Naive thymus-derived CD4-positive, alpha-beta T cell (primary cell): ENCODE measurements at regions of chr5 and their contacts with region 1.

Region 1: DNA sequence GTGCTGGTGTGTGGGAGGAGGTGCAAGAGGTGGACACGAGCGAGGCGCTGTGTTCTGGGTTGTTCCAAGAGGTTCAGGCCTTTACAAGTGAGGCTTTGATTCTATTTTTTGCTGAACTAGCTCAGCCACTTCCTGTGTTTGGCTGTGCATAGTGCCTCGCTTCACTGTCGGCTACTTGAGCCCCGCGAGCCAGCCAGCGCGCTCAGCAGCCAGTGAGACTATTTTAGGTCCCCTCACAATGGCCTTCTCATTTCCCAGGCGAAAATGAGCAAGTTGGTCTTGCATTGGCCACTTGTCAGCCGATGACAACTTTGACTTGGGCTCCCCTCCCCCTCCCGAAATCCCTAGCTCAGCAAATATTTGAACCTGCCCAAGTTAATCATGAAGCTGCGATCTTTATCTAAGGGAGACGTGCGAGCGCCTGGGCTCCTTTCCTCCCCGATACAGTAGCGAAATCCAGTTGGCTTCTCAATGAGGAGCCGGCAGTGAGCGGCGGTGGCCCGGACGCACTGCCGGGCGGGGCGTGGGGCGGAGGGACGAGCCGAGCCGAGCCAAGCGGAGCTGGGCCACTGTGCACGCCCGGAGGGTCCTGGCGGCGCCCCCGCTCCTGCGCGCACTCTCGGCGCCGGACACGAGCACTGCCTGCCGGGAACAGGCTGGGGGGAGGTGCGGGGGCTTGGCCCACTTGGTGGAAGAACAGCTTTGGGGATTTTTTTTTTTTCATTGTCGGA is 72.6 kb downstream of the PIK3R1 start:
- DNase-seq: peak; percentile 19 to 55 (median 49)
- ATAC-seq: peak; percentile 76
- H3K4me3 ChIP-seq: peak overlapping the region; percentile 65
- H3K4me3 Mint-ChIP-seq: peak overlapping the region; percentile 81 to 93 (median 90)
- H3K27ac ChIP-seq: peak overlapping the region; percentile 55
- H3K27ac Mint-ChIP-seq: peak overlapping the region; percentile 75 to 97 (median 92)
- H3K4me1 ChIP-seq: peaks cover 64 to 79% of the 10 kb centered on the region in 2 donors
- H3K4me1 Mint-ChIP-seq: peaks cover 49 to 96% (median 90%) of the 10 kb centered on the region in 7 donors
- H3K27me3 ChIP-seq: no peaks in the 10 kb centered on the region
- H3K27me3 Mint-ChIP-seq: no peaks in the 10 kb centered on the region

Region 2: GRCh38 chr5:67453111-67453905 is 834.8 kb before region 1 on chr5:
- CTCF ChIA-PET with region 1: no interaction called
- POLR2A ChIA-PET with region 1: no interaction called
- intact Hi-C with region 1: no loop called
- DNase-seq: no peak
- ATAC-seq: no peak
- H3K4me3 ChIP-seq: no peak overlapping the region
- H3K4me3 Mint-ChIP-seq: no peak overlapping the region
- H3K27ac ChIP-seq: no peak overlapping the region
- H3K27ac Mint-ChIP-seq: no peak overlapping the region
- H3K4me1 ChIP-seq: no peaks in the 10 kb centered on the region
- H3K4me1 Mint-ChIP-seq: peaks cover 0 to 15% (median 5%) of the 10 kb centered on the region in 7 donors
- H3K27me3 ChIP-seq: no peaks in the 10 kb centered on the region
- H3K27me3 Mint-ChIP-seq: peaks cover 0 to 11% (median 0%) of the 10 kb centered on the region in 5 donors

Region 3: DNA sequence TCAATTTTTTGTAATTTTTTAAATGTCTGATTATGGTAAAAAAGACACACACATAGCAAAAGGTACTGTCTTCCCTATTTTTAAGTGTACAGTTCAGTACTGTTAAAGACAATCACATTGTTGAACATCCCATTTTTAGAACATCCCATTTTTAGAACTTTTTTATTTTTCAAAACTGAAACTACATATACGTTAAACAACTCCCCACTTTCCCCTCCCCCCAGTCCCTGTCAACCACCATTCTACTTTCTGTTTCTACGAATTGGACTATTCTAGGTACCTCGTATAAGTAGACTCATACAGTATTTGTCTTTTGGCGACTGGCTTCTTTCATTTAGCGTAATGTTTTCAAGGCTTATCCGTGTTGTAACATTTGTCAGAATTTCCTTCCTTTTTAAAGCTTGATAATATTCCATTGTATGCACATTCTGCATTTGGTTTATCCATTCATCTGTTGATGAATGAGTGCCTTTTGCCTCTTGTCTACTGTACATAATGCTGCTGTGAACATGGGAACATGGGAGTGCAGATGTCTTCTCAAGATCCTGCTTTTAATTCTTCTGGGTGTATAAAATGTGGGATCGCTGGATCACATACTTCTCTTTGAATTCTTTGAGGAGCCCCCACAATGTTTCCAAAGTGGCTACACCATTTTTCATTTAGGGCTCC is 81.5 kb after region 1 on chr5:
- CTCF ChIA-PET with region 1: interaction called, 3 read pairs
- POLR2A ChIA-PET with region 1: no interaction called
- intact Hi-C with region 1: loop called in 1 of 2 experiments (anchors 2 kb)
- DNase-seq: peak in 7 of 9 donors; percentile 17 to 52 (median 50)
- ATAC-seq: peak; percentile 83
- H3K4me3 ChIP-seq: peak overlapping the region; percentile 26
- H3K4me3 Mint-ChIP-seq: peak overlapping the region; percentile 36 to 84 (median 76)
- H3K27ac ChIP-seq: no peak overlapping the region
- H3K27ac Mint-ChIP-seq: peak overlapping the region; percentile 23 to 91 (median 68)
- H3K4me1 ChIP-seq: peaks cover 0 to 16% of the 10 kb centered on the region in 2 donors
- H3K4me1 Mint-ChIP-seq: peaks cover 6 to 51% (median 29%) of the 10 kb centered on the region in 7 donors
- H3K27me3 ChIP-seq: no peaks in the 10 kb centered on the region
- H3K27me3 Mint-ChIP-seq: peaks cover 0 to 6% (median 0%) of the 10 kb centered on the region in 5 donors

Region 4: DNA sequence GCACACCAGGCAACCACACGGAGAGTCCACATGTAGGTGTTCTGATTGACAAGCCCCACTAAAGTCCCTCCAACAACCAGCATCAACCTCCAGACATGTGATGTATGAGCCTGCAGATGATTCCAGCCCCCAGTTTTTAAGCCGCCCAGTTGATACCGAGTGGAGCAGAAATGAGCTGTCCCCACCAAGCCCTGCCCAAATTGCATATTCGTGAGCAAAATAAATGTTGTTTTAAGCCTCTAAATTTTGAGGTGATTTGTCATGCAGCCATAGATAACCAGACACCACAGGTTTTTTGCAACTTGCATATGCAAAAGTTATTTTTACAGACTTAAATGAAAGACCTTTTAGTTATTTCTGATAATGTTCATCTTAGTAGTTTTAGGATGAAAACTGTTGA is 115.2 kb after region 1 on chr5:
- CTCF ChIA-PET with region 1: no interaction called
- POLR2A ChIA-PET with region 1: no interaction called
- intact Hi-C with region 1: no loop called
- DNase-seq: no peak
- ATAC-seq: no peak
- H3K4me3 ChIP-seq: no peak overlapping the region
- H3K4me3 Mint-ChIP-seq: no peak overlapping the region
- H3K27ac ChIP-seq: no peak overlapping the region
- H3K27ac Mint-ChIP-seq: no peak overlapping the region
- H3K4me1 ChIP-seq: peaks cover 8 to 18% of the 10 kb centered on the region in 2 donors
- H3K4me1 Mint-ChIP-seq: peaks cover 12 to 25% (median 14%) of the 10 kb centered on the region in 7 donors
- H3K27me3 ChIP-seq: no peaks in the 10 kb centered on the region
- H3K27me3 Mint-ChIP-seq: no peaks in the 10 kb centered on the region

Region 5: DNA sequence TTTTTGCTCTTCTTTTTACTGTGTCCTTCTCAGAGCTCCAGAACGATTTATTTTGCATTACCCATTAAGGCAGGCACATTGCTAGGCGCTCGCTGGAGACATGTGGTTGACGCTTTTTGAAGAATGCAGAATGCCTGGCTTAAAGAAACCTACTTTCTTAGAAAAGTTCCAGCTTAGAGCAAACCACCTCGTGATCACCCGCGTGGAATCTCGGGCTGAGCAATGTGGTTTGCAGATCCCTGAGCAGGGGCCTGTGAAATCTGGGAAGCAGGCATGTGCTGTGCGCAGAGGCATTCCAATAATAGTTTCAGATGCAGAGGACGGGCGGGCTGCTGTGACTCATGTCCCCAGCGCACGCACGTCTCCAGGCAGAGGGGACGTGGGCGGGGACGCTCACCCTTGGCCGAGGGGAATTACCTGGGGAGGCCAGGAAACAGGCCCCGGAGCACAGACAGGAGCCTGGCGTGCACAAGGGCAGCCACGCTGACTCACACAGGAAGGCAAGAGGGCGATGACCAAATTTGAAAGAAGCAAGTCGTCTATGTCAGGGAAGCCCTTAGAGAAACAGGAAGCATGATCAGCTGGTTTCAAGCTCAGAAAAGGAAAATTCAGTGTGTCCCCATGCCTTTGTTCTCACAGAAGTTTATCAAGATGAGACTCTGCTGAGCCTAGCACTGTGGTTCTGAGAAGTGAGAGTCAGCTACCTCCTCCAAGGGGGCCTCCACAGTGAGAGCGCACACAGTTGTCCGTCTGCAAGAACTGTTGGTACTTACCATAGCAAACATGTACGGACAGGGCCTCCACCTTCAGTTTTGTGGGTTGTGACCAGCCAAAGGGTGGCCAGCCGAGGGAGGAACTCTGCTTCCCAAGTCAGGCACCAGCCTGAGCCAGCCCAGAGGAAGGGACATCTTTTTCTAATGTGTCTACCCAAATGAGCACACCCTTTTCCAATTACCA is 146.1 kb after region 1 on chr5:
- CTCF ChIA-PET with region 1: interaction called, 4 read pairs
- POLR2A ChIA-PET with region 1: interaction called, 4 read pairs
- intact Hi-C with region 1: loop called (anchors 1 kb)
- DNase-seq: peak; percentile 45 to 91 (median 68)
- ATAC-seq: peak; percentile 94
- H3K4me3 ChIP-seq: peak overlapping the region; percentile 36
- H3K4me3 Mint-ChIP-seq: peak overlapping the region; percentile 37 to 81 (median 76)
- H3K27ac ChIP-seq: no peak overlapping the region
- H3K27ac Mint-ChIP-seq: peak overlapping the region; percentile 52 to 92 (median 76)
- H3K4me1 ChIP-seq: peaks cover 17 to 23% of the 10 kb centered on the region in 2 donors
- H3K4me1 Mint-ChIP-seq: peaks cover 23 to 45% (median 34%) of the 10 kb centered on the region in 7 donors
- H3K27me3 ChIP-seq: no peaks in the 10 kb centered on the region
- H3K27me3 Mint-ChIP-seq: peaks cover 0 to 63% (median 0%) of the 10 kb centered on the region in 5 donors

Region 6: DNA sequence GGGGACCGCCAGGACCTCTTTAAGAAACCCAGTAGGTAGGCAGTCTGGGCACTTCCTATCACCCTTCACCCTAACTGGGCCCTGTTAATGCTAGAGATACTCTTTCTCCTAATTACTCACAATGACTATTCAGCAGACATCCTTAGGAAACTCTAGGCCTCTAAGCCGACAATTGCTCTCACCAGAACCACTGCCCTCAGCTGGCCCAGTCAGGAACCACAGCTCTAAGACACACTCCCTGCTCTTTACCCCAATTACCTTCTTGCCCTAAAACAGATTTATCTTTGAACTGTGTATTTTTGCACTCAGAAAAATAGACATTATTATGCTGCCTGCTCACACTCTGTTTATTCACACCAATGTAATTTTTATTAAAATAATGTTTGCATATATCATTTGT is 373.1 kb after region 1 on chr5:
- CTCF ChIA-PET with region 1: no interaction called
- POLR2A ChIA-PET with region 1: no interaction called
- intact Hi-C with region 1: loop called (anchors 2 to 5 kb)
- DNase-seq: no peak
- ATAC-seq: no peak
- H3K4me3 ChIP-seq: no peak overlapping the region
- H3K4me3 Mint-ChIP-seq: no peak overlapping the region
- H3K27ac ChIP-seq: no peak overlapping the region
- H3K27ac Mint-ChIP-seq: no peak overlapping the region
- H3K4me1 ChIP-seq: no peaks in the 10 kb centered on the region
- H3K4me1 Mint-ChIP-seq: peaks cover 0 to 8% (median 0%) of the 10 kb centered on the region in 7 donors
- H3K27me3 ChIP-seq: no peaks in the 10 kb centered on the region
- H3K27me3 Mint-ChIP-seq: peaks cover 0 to 11% (median 4%) of the 10 kb centered on the region in 5 donors

Region 7: DNA sequence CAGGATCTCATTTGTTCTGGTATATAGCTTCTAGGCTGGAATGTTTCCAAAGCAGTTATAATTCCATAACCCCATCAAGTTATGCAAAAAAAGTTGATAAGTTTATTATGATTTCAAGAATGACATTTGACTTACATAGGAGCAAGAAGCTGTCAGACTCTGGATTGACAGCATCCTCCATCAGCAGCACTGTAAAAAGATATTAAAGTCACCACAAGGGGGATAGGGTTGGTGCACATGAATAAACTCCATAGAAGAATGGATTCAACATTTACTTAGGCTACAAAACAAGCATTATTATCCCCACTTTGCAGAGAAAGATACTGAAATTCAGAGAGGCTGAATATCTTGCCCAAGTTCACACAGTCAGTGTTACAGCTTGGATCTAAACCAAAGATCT is 596.7 kb after region 1 on chr5:
- CTCF ChIA-PET with region 1: interaction called, 3 read pairs
- POLR2A ChIA-PET with region 1: no interaction called
- intact Hi-C with region 1: loop called (anchors 1 to 5 kb)
- DNase-seq: peak in 5 of 9 donors; percentile 16 to 37 (median 27)
- ATAC-seq: peak; percentile 42
- H3K4me3 ChIP-seq: no peak overlapping the region
- H3K4me3 Mint-ChIP-seq: no peak overlapping the region
- H3K27ac ChIP-seq: no peak overlapping the region
- H3K27ac Mint-ChIP-seq: no peak overlapping the region
- H3K4me1 ChIP-seq: peaks cover 10 to 19% of the 10 kb centered on the region in 2 donors
- H3K4me1 Mint-ChIP-seq: peaks cover 13 to 54% (median 37%) of the 10 kb centered on the region in 7 donors
- H3K27me3 ChIP-seq: no peaks in the 10 kb centered on the region
- H3K27me3 Mint-ChIP-seq: peaks cover 0 to 3% (median 0%) of the 10 kb centered on the region in 5 donors

Region 8: DNA sequence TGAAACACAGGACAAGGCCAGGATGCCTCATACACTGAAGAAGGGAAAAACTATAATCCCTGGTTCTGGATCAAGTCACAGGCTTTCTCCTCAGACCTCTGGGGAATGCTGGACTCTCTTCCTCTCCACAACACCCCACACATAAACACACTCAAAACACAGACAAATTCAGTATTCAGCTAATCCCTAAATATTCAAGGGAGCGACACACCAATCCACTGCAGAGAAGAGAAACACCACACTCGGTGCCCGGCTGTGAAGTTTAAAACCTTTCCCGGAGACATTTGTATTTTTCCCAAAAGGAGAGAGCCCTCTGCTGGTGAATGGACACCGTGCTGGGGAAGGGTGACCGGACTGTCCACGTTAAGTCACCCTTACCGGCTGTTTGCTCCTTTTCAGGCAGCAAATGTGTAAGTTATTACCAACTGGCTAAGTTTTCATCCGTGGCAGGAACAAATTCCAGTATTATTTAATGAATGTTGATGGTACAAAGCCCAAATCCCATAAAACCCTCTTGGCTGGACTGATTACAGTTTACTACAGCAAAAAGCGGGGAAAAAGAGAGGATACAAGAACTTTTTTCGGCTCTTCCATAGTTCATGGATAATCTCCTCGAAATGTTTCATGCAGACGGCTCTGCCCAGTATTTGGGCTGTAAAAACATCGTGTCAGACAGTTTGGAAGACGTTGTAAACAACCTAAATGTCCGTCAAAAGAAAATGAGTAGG is 674.8 kb after region 1 on chr5:
- CTCF ChIA-PET with region 1: interaction called, 3 read pairs
- POLR2A ChIA-PET with region 1: no interaction called
- intact Hi-C with region 1: loop called (anchors 1 to 2 kb)
- DNase-seq: peak in 1 of 9 donors; percentile 23
- ATAC-seq: no peak
- H3K4me3 ChIP-seq: no peak overlapping the region
- H3K4me3 Mint-ChIP-seq: peak overlapping the region in 1 of 10 donors; percentile 20
- H3K27ac ChIP-seq: no peak overlapping the region
- H3K27ac Mint-ChIP-seq: peak overlapping the region in 1 of 9 donors; percentile 60
- H3K4me1 ChIP-seq: no peaks in the 10 kb centered on the region
- H3K4me1 Mint-ChIP-seq: peaks cover 0 to 6% (median 0%) of the 10 kb centered on the region in 7 donors
- H3K27me3 ChIP-seq: no peaks in the 10 kb centered on the region
- H3K27me3 Mint-ChIP-seq: no peaks in the 10 kb centered on the region

Region 9: DNA sequence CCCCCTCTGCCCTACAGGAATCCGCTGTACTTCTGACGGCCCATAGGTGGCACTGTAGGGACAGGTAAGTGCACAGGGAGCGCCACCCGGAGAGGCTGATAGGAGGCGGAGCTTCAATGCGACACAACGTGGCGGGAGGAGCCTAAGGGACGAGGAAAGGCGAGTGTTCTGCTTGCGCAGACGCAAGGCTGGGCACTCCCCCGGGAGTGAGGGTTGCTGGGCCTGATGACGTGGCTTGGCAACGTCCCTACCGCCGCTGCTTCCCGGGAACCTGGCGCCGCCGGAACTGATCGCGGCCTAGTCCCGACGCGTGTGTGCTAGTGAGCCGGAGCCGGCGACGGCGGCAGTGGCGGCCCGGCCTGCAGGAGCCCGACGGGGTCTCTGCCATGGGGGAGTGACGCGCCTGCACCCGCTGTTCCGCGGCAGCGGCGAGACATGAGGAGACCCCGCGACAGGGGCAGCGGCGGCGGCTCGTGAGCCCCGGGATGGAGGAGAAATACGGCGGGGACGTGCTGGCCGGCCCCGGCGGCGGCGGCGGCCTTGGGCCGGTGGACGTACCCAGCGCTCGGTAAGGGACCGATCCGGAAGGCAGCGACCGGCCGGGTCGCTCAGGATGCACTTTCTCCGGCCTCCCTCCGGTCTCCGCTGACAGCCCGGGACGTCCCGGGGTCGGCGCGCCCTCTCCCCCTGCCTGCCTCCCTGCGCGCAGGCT is 805.8 kb after region 1 on chr5 and contains the start of gene SLC30A5:
- CTCF ChIA-PET with region 1: no interaction called
- POLR2A ChIA-PET with region 1: no interaction called
- intact Hi-C with region 1: loop called in 1 of 2 experiments (anchors 5 kb)
- DNase-seq: peak; percentile 83 to 99 (median 98)
- ATAC-seq: peak; percentile 99
- H3K4me3 ChIP-seq: peak within 1 kb of the TSS; percentile 70
- H3K4me3 Mint-ChIP-seq: peak within 1 kb of the TSS; percentile 89 to 94 (median 93)
- H3K27ac ChIP-seq: peak within 1 kb of the TSS; percentile 98
- H3K27ac Mint-ChIP-seq: peak within 1 kb of the TSS; percentile 84 to 98 (median 95)
- H3K4me1 ChIP-seq: peaks cover 9 to 17% of the 10 kb centered on the region in 2 donors
- H3K4me1 Mint-ChIP-seq: peaks cover 17 to 49% (median 37%) of the 10 kb centered on the region in 7 donors
- H3K27me3 ChIP-seq: no peaks in the 10 kb centered on the region
- H3K27me3 Mint-ChIP-seq: no peaks in the 10 kb centered on the region
- total RNA-seq, gene SLC30A5: 15.9 to 46.5 (median 41.3) TPM